ENCODE measurements at regions of chr5 and their contacts with region 1.

Region 1: GRCh38 chr5:40277161-40277906 is 402.4 kb upstream of the PTGER4 start:
- DNase-seq: peak; percentile 31
- H3K4me3 Mint-ChIP-seq: peak overlapping the region; percentile 17
- H3K27ac Mint-ChIP-seq: peak overlapping the region; percentile 93
- H3K4me1 Mint-ChIP-seq: peaks cover 70% of the 10 kb centered on the region
- H3K27me3 Mint-ChIP-seq: no peaks in the 10 kb centered on the region

Region 2: GRCh38 chr5:40171971-40172370 is 105.4 kb before region 1 on chr5:
- intact Hi-C with region 1: loop called (anchors 1 kb)
- DNase-seq: no peak
- H3K4me3 Mint-ChIP-seq: no peak overlapping the region
- H3K27ac Mint-ChIP-seq: no peak overlapping the region
- H3K4me1 Mint-ChIP-seq: peaks cover 8% of the 10 kb centered on the region
- H3K27me3 Mint-ChIP-seq: no peaks in the 10 kb centered on the region

Region 3: DNA sequence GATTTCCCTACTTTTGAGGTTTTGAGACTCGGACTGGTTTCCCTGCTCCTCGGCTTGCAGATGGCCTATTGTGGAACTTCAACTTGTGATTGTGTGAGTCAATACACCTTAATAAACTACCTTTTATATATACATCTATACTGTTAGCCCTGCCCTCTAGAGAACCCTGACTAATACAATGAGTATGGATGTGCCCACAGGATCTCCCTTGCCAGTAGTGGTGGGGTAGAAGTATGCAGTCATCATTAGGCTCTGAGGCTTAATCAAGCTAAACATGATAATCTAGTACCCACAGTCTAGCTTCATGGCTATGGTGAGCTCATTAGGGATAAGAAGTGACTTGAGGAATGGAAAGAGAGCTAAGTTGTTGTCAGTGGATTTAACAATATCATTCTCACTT is 10.4 kb before region 1 on chr5:
- intact Hi-C with region 1: no loop called
- DNase-seq: no peak
- H3K4me3 Mint-ChIP-seq: no peak overlapping the region
- H3K27ac Mint-ChIP-seq: no peak overlapping the region
- H3K4me1 Mint-ChIP-seq: peaks cover 19% of the 10 kb centered on the region
- H3K27me3 Mint-ChIP-seq: peaks cover 3% of the 10 kb centered on the region

Region 4: DNA sequence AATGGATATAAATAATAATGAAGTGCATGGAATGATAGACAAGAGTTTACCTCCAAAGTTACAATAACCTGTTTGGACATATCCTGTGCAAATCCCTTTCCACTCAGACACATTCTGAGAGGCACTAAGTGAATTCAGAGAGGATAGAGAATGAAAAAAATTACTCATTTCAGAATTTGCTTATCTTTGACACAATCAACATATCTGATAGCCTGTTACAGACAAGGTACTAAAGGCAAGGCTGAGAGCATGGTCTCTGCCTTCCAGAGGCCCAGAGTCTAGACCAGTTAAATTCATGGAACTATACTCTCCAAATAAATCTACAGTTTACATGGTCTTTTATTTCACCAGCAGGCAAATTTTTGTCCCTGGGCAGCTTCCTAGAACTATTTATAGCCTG is 30.6 kb after region 1 on chr5:
- intact Hi-C with region 1: loop called (anchors 1 kb)
- DNase-seq: no peak
- H3K4me3 Mint-ChIP-seq: no peak overlapping the region
- H3K27ac Mint-ChIP-seq: no peak overlapping the region
- H3K4me1 Mint-ChIP-seq: peaks cover 12% of the 10 kb centered on the region
- H3K27me3 Mint-ChIP-seq: no peaks in the 10 kb centered on the region

Region 5: DNA sequence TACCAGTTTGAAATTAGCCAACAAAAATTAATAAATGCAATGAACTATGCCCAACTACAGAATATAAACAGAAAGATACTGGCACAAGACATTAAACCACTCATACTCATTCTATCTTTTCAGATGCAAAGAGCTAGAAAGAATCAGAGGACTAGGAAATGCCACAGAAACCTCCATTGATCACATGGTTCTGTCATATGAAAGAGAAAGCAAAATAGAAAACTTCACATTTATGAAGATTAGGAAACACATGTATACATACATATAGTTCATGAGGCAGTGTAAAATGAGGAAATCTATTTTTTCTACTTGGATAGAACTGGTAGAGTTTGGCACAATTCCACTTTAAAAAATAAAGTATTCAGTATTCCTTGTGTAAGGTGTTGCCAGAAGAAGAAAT is 127.3 kb after region 1 on chr5:
- intact Hi-C with region 1: loop called (anchors 1 kb)
- DNase-seq: peak; percentile 12
- H3K4me3 Mint-ChIP-seq: peak overlapping the region; percentile 59
- H3K27ac Mint-ChIP-seq: peak overlapping the region; percentile 99
- H3K4me1 Mint-ChIP-seq: peaks cover 86% of the 10 kb centered on the region
- H3K27me3 Mint-ChIP-seq: no peaks in the 10 kb centered on the region

Region 6: GRCh38 chr5:40486437-40487275 is 209.3 kb after region 1 on chr5:
- intact Hi-C with region 1: loop called (anchors 1 kb)
- DNase-seq: peak; percentile 63
- H3K4me3 Mint-ChIP-seq: peak overlapping the region; percentile 23
- H3K27ac Mint-ChIP-seq: peak overlapping the region; percentile 83
- H3K4me1 Mint-ChIP-seq: peaks cover 79% of the 10 kb centered on the region
- H3K27me3 Mint-ChIP-seq: no peaks in the 10 kb centered on the region

Region 7: GRCh38 chr5:40688127-40688761 is 410.9 kb after region 1 on chr5:
- intact Hi-C with region 1: loop called (anchors 1 kb)
- DNase-seq: peak; percentile 81
- H3K4me3 Mint-ChIP-seq: peak overlapping the region; percentile 99
- H3K27ac Mint-ChIP-seq: peak overlapping the region; percentile 91
- H3K4me1 Mint-ChIP-seq: peaks cover 71% of the 10 kb centered on the region
- H3K27me3 Mint-ChIP-seq: no peaks in the 10 kb centered on the region